Endothelial cell of umbilical vein (primary cell): ENCODE measurements at regions of chr5 and their contacts with region 1.

Region 1: DNA sequence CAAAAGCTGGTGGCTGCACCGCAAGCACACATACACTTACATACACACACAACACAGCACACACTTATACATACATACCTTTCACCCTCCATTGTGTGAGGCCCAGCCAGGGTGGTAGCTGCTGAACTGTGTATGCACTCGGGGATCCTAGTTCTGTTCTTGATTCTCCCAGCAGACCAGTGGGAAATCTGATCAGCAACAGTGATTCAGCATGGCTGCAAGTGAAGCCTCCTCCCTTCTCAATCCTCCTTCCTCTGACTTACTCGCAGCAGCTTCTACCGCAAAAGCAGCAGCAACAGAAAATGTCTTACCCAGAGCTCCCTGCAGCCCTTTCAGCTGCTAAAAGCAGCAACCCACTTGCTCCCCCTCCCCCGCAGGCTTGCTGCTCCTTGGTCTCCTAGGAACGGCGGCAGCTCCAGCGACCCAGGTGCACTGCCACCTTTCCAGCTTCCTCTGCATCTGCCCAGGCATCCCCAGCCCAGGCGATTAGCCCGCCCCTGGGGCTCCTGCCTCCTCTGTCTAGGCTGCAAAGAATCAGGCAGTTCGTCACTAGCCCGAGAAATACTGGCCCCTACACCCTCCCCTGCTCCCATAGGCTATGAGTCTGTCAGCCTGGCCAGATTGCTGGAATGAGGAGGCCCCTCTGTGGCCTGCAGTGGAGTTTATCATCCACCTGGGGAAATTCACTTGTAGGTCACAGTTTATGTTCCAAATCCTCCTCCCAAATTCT is at the start of gene KLHL3:
- DNase-seq: peak; percentile 81
- H3K4me3 ChIP-seq: peak within 1 kb of the TSS; percentile 56 to 74 (median 64)
- H3K27ac ChIP-seq: peak within 1 kb of the TSS; percentile 76
- H3K4me1 ChIP-seq: peaks cover 40% of the 10 kb centered on the region
- H3K27me3 ChIP-seq: no peaks in the 10 kb centered on the region
- CTCF ChIP-seq: peak; percentile 16 to 26
- POLR2A ChIP-seq: peak; percentile 71
- total RNA-seq, gene KLHL3: 13.6 and 13.9 TPM in 2 replicates

Region 2: GRCh38 chr5:137706841-137707240 is 28.9 kb before region 1 on chr5:
- CTCF ChIA-PET with region 1: no interaction called
- POLR2A ChIA-PET with region 1: no interaction called
- dilution Hi-C with region 1: no loop called
- intact Hi-C with region 1: loop called (anchors 1 kb)
- DNase-seq: peak; percentile 77
- H3K4me3 ChIP-seq: no peak overlapping the region
- H3K27ac ChIP-seq: peak overlapping the region; percentile 69
- H3K4me1 ChIP-seq: peaks cover 17% of the 10 kb centered on the region
- H3K27me3 ChIP-seq: no peaks in the 10 kb centered on the region
- CTCF ChIP-seq: no peak
- POLR2A ChIP-seq: peak; percentile 32

Region 3: DNA sequence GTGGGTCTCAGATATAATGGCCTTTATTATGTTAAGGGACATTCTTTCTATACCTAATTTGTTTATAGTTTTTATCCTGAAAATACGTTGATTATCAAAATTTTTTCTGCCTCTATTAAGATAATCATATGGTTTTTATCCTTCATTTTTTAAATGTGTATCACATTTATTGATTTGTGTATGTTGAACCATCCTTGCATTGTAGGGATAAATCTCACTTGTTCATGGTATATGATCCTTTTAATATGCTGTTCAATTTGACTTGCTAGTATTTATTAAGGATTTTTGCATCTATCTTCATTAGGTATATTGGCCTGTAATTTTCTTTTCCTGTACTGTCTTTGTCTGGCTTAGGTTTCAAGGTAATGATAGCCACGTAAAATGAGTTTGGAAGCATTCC is 179.0 kb after region 1 on chr5:
- CTCF ChIA-PET with region 1: no interaction called
- POLR2A ChIA-PET with region 1: no interaction called
- dilution Hi-C with region 1: no loop called
- intact Hi-C with region 1: no loop called
- DNase-seq: no peak
- H3K4me3 ChIP-seq: no peak overlapping the region
- H3K27ac ChIP-seq: no peak overlapping the region
- H3K4me1 ChIP-seq: no peaks in the 10 kb centered on the region
- H3K27me3 ChIP-seq: no peaks in the 10 kb centered on the region
- CTCF ChIP-seq: no peak
- POLR2A ChIP-seq: no peak

Region 4: DNA sequence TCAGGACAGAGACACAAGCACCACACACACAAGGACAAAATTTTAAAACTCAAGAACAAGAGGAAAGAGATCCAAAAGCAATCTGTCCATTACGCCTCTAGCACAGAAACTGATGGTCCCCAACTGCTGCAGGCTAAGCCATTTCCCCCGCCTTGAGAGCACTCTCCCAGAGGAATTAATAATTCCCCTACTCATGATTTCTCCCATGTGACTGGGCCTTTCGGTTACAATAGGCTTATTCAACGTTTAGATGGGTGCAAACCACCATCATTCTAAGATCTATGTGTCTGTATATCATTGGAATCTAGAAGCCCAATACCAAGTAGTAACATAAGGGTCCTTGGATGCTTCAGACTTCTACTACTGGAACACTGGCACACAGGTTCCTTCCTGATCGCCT is 423.9 kb after region 1 on chr5:
- CTCF ChIA-PET with region 1: no interaction called
- POLR2A ChIA-PET with region 1: no interaction called
- dilution Hi-C with region 1: no loop called
- intact Hi-C with region 1: no loop called
- DNase-seq: no peak
- H3K4me3 ChIP-seq: no peak overlapping the region
- H3K27ac ChIP-seq: no peak overlapping the region
- H3K4me1 ChIP-seq: no peaks in the 10 kb centered on the region
- H3K27me3 ChIP-seq: no peaks in the 10 kb centered on the region
- CTCF ChIP-seq: no peak
- POLR2A ChIP-seq: no peak